CD4-positive, alpha-beta memory T cell (primary cell): ENCODE measurements at regions of chr19 and their contacts with region 1.

Region 1: GRCh38 chr19:15154002-15154612 is 46.7 kb downstream of the NOTCH3 start:
- DNase-seq: no peak
- H3K4me3 ChIP-seq: no peak overlapping the region
- H3K4me3 Mint-ChIP-seq: no peak overlapping the region
- H3K27ac ChIP-seq: no peak overlapping the region
- H3K27ac Mint-ChIP-seq: no peak overlapping the region
- H3K4me1 ChIP-seq: no peaks in the 10 kb centered on the region
- H3K4me1 Mint-ChIP-seq: peaks cover 0 to 5% (median 4%) of the 10 kb centered on the region in 4 donors
- H3K27me3 ChIP-seq: no peaks in the 10 kb centered on the region
- H3K27me3 Mint-ChIP-seq: peaks cover 14 to 21% of the 10 kb centered on the region in 2 donors

Region 2: GRCh38 chr19:15091901-15092753 is 62.0 kb before region 1 on chr19:
- CTCF ChIA-PET with region 1: interaction called, 82 read pairs
- POLR2A ChIA-PET with region 1: no interaction called
- intact Hi-C with region 1: loop called (anchors 1 kb)
- DNase-seq: peak; percentile 56 to 67 (median 65)
- H3K4me3 ChIP-seq: no peak overlapping the region
- H3K4me3 Mint-ChIP-seq: peak overlapping the region in 1 of 8 donors; percentile 8
- H3K27ac ChIP-seq: no peak overlapping the region
- H3K27ac Mint-ChIP-seq: peak overlapping the region in 2 of 7 donors; percentile 63 to 65
- H3K4me1 ChIP-seq: peaks cover 6% of the 10 kb centered on the region
- H3K4me1 Mint-ChIP-seq: peaks cover 0 to 4% (median 3%) of the 10 kb centered on the region in 4 donors
- H3K27me3 ChIP-seq: no peaks in the 10 kb centered on the region
- H3K27me3 Mint-ChIP-seq: peaks cover 5 to 9% of the 10 kb centered on the region in 2 donors

Region 3: DNA sequence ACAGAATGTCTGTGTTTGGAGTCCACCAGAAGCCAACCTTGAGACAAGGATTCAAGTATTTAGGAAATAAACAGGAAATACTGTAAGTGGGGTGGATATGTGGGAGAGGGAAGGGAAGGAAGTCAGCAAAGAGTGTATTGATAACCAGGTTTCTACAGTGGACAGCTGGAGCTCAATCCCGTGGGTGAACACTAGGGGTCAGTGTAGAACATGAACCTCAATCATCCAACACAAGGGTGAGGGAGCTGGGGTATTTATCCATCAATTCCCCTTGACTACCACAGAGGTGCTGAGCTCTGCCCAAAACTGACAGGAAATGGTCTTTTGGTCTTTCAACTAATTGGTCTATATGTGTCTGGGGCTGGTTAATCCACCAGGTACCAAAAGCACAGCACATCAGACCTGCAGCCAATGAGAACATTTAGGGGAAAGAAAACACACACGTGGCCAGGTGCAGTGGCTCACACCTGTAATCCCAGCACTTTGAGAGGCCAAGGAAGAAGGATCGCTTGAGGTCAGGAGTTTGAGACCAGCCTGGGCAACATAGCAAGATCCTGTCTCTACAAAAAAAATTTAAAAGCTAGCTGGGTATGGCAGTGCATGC is 52.5 kb before region 1 on chr19:
- CTCF ChIA-PET with region 1: interaction called, 74 read pairs
- POLR2A ChIA-PET with region 1: no interaction called
- intact Hi-C with region 1: loop called (anchors 1 kb)
- DNase-seq: peak in 4 of 5 donors; percentile 35 to 44 (median 40)
- H3K4me3 ChIP-seq: no peak overlapping the region
- H3K4me3 Mint-ChIP-seq: peak overlapping the region in 1 of 8 donors; percentile 15
- H3K27ac ChIP-seq: no peak overlapping the region
- H3K27ac Mint-ChIP-seq: no peak overlapping the region
- H3K4me1 ChIP-seq: no peaks in the 10 kb centered on the region
- H3K4me1 Mint-ChIP-seq: peaks cover under 1 to 7% (median 2%) of the 10 kb centered on the region in 4 donors
- H3K27me3 ChIP-seq: no peaks in the 10 kb centered on the region
- H3K27me3 Mint-ChIP-seq: peaks cover 14 to 20% of the 10 kb centered on the region in 2 donors

Region 4: GRCh38 chr19:15125232-15126067 is 28.7 kb before region 1 on chr19:
- CTCF ChIA-PET with region 1: interaction called, 7 read pairs
- POLR2A ChIA-PET with region 1: no interaction called
- intact Hi-C with region 1: loop called (anchors 1 kb)
- DNase-seq: peak; percentile 96
- H3K4me3 ChIP-seq: peak overlapping the region; percentile 86 to 89
- H3K4me3 Mint-ChIP-seq: peak overlapping the region; percentile 91 to 99 (median 98)
- H3K27ac ChIP-seq: peak overlapping the region; percentile 90
- H3K27ac Mint-ChIP-seq: peak overlapping the region; percentile 95 to 100 (median 98)
- H3K4me1 ChIP-seq: peaks cover 31% of the 10 kb centered on the region
- H3K4me1 Mint-ChIP-seq: peaks cover 22 to 48% (median 36%) of the 10 kb centered on the region in 4 donors
- H3K27me3 ChIP-seq: no peaks in the 10 kb centered on the region
- H3K27me3 Mint-ChIP-seq: peaks cover 0 to 6% of the 10 kb centered on the region in 2 donors

Region 5: DNA sequence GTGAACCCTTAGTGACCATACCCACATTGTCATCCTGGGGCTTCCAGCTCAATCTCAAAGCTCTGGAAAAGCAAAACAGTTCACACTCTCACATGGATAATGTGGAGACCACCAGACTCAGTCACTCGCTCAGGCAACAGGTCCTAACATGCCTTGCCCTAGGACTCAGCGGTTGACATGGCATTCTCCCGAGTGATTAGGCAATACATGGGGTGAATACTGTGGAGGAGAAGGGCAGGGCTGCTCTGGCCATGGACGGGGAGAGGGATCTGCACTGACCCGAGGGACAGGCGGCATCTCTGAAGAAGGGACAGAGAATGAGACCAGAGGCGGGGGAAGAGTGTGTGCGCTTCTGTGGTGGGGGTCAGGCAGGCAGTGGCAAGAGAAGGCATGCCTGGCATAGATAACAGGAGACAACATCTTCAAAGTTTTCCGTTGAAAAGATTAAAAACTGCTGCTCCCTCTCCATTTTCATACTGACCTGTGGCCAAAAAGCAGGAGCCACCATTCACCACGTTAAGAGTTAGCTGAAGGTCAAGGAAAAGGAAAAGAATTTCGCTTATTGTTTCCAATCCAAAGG is 122.6 kb after region 1 on chr19:
- CTCF ChIA-PET with region 1: no interaction called
- POLR2A ChIA-PET with region 1: no interaction called
- intact Hi-C with region 1: no loop called
- DNase-seq: no peak
- H3K4me3 ChIP-seq: no peak overlapping the region
- H3K4me3 Mint-ChIP-seq: peak overlapping the region in 3 of 8 donors; percentile 5 to 48 (median 40)
- H3K27ac ChIP-seq: no peak overlapping the region
- H3K27ac Mint-ChIP-seq: peak overlapping the region in 6 of 7 donors; percentile 33 to 75 (median 63)
- H3K4me1 ChIP-seq: peaks cover 68% of the 10 kb centered on the region
- H3K4me1 Mint-ChIP-seq: peaks cover 48 to 90% (median 68%) of the 10 kb centered on the region in 4 donors
- H3K27me3 ChIP-seq: no peaks in the 10 kb centered on the region
- H3K27me3 Mint-ChIP-seq: no peaks in the 10 kb centered on the region